Activated T-helper 1 cell treated with anti-CD3 and anti-CD28 coated beads, Interleukin-12 subunit alpha, Interleukin-12 subunit beta, Interleukin-2, Interleukin-4 antibody, amounts not matched to agents 30 ng/mL and 10 ng/mL and 1 ng/mL, durations not matched to agents 14 hours and 24 hours and 36 hours (primary cell): ENCODE measurements at regions of chr6 and their contacts with region 1.

Region 1: DNA sequence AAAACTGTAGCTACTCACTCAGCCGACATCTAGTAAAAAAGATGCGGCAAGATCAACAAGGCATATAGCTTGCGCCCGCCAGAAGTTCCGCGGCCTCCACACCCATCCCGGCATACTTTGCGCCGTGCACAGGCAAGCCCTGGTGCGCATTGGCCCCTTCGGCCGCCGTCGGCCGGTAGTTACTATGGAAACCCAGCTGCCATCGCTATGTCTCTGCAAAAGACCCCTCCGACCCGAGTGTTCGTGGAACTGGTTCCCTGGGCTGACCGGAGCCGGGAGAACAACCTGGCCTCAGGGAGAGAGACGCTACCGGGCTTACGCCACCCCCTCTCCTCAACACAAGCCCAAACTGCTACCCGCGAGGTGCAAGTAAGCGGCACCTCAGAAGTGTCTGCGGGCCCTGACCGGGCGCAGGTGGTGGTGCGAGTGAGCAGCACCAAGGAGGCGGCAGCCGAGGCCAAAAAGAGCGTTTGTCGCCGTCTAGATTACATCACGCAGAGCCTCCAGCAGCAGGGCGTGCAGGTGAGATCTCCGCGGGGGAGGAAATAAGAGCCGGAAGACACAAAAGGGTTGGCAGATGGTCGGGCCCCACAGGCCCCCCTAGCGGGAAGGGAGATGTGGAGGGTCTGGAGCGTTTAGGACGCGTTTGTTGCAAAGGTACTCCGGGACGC is at the start of gene IRAK1BP1:
- DNase-seq: peak; percentile 79
- H3K4me3 Mint-ChIP-seq: peak within 1 kb of the TSS; percentile 97
- H3K27ac Mint-ChIP-seq: peak within 1 kb of the TSS; percentile 95
- H3K4me1 Mint-ChIP-seq: peaks cover 21% of the 10 kb centered on the region
- H3K27me3 Mint-ChIP-seq: peaks cover 2% of the 10 kb centered on the region
- total RNA-seq, gene IRAK1BP1: 3.0 TPM in 2 replicates

Region 2: DNA sequence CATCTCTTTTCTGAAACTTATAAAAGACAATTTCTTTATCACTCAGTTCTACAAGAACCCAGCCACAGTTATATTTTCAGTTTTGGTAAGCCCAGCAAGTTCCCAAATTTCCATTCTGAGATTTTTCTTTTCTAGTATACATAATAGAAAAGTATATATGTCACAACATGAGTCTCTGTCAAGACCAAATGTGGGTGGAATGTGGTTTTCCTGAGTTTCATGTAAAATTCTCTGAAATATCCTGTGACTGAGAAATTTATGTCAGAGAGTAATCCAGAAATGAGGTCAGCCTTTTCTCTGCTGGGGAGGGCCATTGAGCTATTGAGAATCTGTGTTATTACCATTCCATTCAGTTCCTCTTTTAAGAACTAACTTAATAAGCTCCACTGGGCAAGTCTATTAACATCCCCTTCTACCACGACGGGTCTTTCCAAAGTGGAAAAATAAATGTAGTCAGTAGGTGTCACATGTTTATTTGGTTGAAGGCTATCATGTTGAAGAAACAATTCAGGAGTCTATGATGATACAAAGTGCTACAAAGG is 467.7 kb after region 1 on chr6:
- intact Hi-C with region 1: loop called (anchors 1 kb)
- DNase-seq: no peak
- H3K4me3 Mint-ChIP-seq: no peak overlapping the region
- H3K27ac Mint-ChIP-seq: peak overlapping the region; percentile 18
- H3K4me1 Mint-ChIP-seq: peaks cover 14% of the 10 kb centered on the region
- H3K27me3 Mint-ChIP-seq: no peaks in the 10 kb centered on the region

Region 3: DNA sequence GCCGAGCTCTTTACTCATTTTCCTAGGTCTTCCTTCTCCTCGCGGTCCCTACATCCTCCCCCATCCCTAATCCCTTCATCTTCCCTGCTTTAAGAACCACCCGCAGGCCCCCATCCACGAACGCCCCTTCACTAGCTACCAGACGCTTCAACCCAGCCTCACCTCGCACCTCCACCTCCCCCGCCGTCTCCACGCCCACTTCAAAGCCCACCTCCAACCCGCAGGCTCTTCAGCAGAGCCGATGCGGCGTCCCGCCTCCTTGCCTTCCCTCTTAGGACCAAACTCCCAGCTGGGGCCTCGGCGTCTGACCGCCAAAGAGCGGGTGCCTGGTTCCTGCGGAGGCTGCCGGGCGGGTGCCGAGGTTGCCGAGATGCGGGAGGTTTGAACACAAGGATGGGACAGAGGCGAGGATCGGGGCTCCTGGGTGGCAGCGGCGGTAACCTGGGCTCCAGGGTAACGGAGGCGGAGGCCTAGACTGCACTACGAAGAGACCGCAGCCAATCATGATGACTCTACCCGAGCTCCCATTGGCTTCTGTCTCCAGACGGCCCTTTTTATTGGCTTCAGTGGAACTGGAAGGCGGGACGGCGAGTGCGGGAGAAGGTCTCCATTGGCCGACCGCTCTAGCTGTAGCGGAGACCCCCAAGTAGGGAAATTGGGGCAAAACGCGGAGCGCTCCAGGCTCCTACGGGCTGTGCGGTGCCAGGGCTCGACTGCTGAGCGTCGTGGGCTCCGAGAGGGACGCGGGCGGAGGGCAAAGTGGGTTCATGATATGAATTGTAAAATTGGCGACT is 669.6 kb after region 1 on chr6 and contains the start of gene LCA5:
- intact Hi-C with region 1: loop called (anchors 1 kb)
- DNase-seq: peak; percentile 81
- H3K4me3 Mint-ChIP-seq: no peak within 1 kb of the TSS
- H3K27ac Mint-ChIP-seq: no peak within 1 kb of the TSS
- H3K4me1 Mint-ChIP-seq: no peaks in the 10 kb centered on the region
- H3K27me3 Mint-ChIP-seq: peaks cover 17% of the 10 kb centered on the region
- total RNA-seq, gene LCA5: 0.08 and 0.17 TPM in 2 replicates

Region 4: DNA sequence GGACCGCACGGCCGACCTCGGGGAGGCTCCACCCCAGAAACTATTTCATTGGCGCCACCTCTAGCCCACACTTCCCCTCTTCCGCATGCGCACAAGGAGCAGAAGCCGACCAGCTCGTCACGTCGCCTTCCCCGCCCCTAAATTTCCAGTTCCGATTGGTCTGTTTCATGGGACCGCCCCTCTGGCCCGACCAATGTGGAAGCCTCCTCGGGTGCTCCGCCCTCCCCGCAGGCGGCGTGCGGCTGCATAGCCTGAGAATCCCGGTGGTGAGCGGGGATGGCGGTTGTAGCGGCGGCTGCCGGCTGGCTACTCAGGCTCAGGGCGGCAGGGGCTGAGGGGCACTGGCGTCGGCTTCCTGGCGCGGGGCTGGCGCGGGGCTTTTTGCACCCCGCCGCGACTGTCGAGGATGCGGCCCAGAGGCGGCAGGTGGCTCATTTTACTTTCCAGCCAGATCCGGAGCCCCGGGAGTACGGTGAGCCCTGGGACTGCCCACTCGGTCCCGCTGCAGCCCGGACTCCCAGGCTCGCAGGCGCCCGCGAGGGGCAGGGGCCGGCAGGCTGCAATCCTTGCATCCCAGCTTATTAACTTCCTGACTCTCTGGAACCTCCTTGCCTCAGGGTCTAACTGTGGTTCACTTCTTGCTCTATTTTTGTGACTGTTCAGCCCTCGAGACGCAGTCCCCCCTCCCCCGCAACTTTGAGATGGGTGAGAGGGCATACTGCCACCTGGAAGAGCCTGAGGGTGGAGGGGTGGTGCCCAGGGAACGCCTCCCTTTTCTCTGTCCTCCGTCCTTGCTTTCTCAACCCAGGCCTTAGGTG is 1239.1 kb after region 1 on chr6 and contains the start of gene BCKDHB:
- intact Hi-C with region 1: loop called (anchors 1 kb)
- DNase-seq: peak; percentile 98
- H3K4me3 Mint-ChIP-seq: peak within 1 kb of the TSS; percentile 96
- H3K27ac Mint-ChIP-seq: peak within 1 kb of the TSS; percentile 90
- H3K4me1 Mint-ChIP-seq: peaks cover 31% of the 10 kb centered on the region
- H3K27me3 Mint-ChIP-seq: peaks cover 2% of the 10 kb centered on the region
- total RNA-seq, gene BCKDHB: 13.3 and 14.4 TPM in 2 replicates